Activated CD4-positive, alpha-beta T cell treated with anti-CD3 and anti-CD28 coated beads for 36 hours (primary cell): ENCODE measurements at regions of chr3 and their contacts with region 1.

Region 1: DNA sequence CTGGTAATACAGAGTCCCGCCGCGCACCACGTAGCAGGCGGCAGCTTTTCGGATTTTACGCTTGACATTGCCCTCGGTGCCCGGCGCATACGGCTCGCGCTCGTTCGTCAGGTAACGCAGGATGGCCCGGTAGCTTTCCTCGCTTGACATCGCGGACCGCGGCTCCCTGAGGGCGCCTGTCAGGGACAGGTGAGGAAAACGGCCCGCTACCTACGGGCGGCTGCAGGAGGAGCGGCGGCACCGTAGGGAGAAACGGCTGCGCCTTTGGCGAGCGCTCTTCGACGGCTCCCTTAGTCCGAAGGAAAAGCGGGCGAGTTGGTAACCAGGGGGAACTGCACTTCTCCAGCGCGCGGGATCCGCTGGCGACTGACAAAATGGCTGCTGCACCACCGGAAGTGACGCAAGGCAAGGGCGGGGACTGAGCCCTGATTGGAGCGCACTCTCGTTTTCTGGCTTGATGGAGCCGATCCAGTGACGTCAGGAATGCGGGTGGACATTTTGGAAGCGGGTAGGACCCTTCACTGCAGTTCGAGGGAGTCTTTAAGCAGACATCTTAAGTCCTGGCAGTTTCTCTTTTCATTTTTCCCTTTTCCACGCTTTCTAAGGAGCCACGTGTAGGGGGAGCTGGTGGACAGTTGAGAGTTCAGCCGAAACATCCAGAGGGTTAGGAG is at the start of gene ZBTB11:
- DNase-seq: peak; percentile 100
- ATAC-seq: peak; percentile 78
- H3K4me3 Mint-ChIP-seq: peak within 1 kb of the TSS; percentile 94
- H3K27ac Mint-ChIP-seq: peak within 1 kb of the TSS; percentile 92
- H3K4me1 Mint-ChIP-seq: peaks cover 52% of the 10 kb centered on the region
- H3K27me3 Mint-ChIP-seq: no peaks in the 10 kb centered on the region
- total RNA-seq, gene ZBTB11: 25.1 to 26.0 TPM

Region 2: DNA sequence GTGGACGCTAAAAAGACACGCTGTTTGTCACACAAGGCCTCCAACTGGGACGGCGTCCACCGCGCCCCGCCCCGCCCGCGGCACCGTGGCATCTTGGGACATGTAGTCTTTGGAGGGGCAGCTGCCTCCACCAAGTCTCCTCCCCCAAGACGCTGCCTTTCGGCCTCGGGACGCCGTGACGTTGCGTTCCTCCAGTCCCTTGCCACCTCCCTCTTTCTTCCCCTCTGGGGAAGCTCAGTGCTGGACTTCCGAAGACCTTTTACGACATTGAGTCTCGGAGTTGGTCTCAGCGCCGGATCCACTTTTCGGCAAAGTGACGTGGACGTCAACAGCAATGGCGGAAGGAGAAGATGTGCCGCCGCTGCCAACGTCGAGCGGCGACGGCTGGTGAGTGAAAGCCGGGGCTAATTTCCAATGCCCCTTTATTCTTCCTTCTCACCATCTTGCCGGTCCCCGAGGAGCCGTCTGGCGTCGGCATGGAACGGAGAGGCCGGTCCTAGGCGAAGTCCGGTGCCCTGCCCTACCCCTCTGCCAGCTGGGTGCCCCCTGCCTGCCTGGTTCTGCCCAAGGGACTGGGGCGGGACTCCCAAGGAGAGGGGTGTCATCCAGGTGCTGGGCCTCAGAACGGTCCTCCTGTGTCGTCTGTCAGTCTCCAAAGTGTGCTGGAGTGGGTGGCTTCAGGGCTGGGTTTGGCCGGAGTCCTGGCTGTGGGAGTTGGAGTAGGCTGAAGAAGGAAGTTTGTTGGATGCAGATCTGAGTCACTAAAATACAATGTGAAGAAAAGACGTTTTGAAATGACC is 1416.0 kb before region 1 on chr3 and contains the start of gene TBC1D23:
- CTCF ChIA-PET with region 1: no interaction called
- POLR2A ChIA-PET with region 1: no interaction called
- intact Hi-C with region 1: loop called in 1 of 2 experiments (anchors 2 kb)
- DNase-seq: peak; percentile 98
- ATAC-seq: peak; percentile 100
- H3K4me3 Mint-ChIP-seq: peak within 1 kb of the TSS; percentile 91
- H3K27ac Mint-ChIP-seq: peak within 1 kb of the TSS; percentile 96
- H3K4me1 Mint-ChIP-seq: peaks cover 58% of the 10 kb centered on the region
- H3K27me3 Mint-ChIP-seq: no peaks in the 10 kb centered on the region
- total RNA-seq, gene TBC1D23: 17.6 to 19.4 TPM

Region 3: DNA sequence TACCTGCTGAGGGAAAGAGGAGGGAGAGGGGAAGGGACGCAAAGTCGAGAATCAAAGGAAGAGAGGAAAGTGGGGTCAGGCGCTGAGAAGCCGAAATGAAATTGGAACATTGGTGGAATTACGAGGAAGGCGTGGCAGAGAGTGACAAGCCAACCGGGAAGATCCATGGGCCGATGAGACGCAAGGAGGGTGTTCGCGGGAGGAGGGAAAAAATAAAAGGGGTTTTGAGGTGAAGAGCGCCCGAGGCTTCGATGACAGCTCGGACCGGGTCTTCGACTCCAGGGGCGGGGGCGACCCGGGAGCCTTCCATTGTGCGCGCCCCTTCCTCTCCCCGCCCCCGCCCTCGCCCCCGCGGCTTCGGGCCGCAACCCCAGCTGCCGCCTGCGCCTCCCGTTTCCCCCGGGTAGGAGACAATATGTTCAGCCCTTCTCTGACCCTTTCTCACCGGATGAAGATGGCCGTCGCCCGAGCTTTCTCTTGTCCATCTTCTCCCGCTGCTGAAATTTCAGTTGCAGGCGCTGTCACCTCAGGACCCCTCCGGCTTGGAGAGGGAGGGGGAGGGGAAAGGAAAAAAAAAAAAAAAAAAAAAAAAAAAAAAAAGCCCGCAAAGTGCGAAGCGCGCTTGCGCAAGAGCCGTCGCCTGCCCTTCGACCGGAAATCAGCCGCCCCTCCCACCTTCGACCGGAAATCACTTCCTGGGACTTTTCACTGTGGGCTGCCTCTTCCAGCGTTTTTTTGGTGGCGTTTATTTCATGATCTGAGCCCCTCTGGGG is 164.1 kb before region 1 on chr3 and contains the start of gene SENP7:
- CTCF ChIA-PET with region 1: no interaction called
- POLR2A ChIA-PET with region 1: no interaction called
- intact Hi-C with region 1: loop called (anchors 2 to 5 kb)
- DNase-seq: peak; percentile 88
- ATAC-seq: peak; percentile 49
- H3K4me3 Mint-ChIP-seq: peak within 1 kb of the TSS; percentile 85
- H3K27ac Mint-ChIP-seq: peak within 1 kb of the TSS; percentile 96
- H3K4me1 Mint-ChIP-seq: peaks cover 53% of the 10 kb centered on the region
- H3K27me3 Mint-ChIP-seq: no peaks in the 10 kb centered on the region
- total RNA-seq, gene SENP7: 12.3 to 12.9 TPM

Region 4: DNA sequence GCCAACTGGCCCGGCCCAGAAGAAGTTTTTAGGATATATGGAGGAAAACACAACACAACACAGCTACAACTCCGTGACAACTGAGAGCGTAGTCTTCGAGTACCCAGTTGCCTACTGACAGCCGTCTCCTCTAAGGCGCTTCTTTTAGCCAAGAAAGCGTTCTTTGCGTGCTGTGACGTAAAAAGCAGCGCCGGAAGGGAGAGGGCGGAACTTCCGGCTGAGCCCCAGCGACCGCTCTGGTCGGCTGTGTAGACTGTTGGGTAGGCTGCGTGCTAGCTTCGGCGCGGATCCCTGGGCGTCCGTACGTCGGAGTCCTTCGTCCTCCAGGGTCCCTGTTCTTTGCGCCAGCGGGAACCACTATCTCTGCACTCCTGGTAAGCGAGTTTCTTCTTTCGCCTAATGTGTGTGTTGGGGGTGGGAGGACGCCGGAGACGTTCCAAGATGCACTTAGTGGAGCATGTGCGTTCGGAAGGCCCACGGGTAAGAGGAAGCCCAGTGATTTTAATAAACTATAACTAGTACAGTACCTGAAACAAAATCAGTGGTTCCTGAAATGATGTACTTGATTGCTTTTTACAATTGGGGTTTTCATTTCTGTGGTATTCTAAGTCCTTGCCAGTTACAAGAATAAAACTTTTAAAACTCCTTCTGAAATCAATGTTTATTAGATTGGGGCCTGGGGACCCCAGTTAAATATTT is 115.1 kb before region 1 on chr3 and contains the start of gene TRMT10C:
- CTCF ChIA-PET with region 1: interaction called, 5 read pairs
- POLR2A ChIA-PET with region 1: interaction called, 3 read pairs
- intact Hi-C with region 1: loop called in 1 of 2 experiments (anchors 1 kb)
- DNase-seq: peak; percentile 96
- ATAC-seq: peak; percentile 98
- H3K4me3 Mint-ChIP-seq: peak within 1 kb of the TSS; percentile 93
- H3K27ac Mint-ChIP-seq: peak within 1 kb of the TSS; percentile 96
- H3K4me1 Mint-ChIP-seq: peaks cover 42% of the 10 kb centered on the region
- H3K27me3 Mint-ChIP-seq: peaks cover 4% of the 10 kb centered on the region
- total RNA-seq, gene TRMT10C: 54.3 to 55.4 TPM

Region 5: GRCh38 chr3:101615525-101615924 is 61.4 kb before region 1 on chr3:
- CTCF ChIA-PET with region 1: no interaction called
- POLR2A ChIA-PET with region 1: no interaction called
- intact Hi-C with region 1: no loop called
- DNase-seq: no peak
- ATAC-seq: no peak
- H3K4me3 Mint-ChIP-seq: no peak overlapping the region
- H3K27ac Mint-ChIP-seq: no peak overlapping the region
- H3K4me1 Mint-ChIP-seq: no peaks in the 10 kb centered on the region
- H3K27me3 Mint-ChIP-seq: no peaks in the 10 kb centered on the region

Region 6: DNA sequence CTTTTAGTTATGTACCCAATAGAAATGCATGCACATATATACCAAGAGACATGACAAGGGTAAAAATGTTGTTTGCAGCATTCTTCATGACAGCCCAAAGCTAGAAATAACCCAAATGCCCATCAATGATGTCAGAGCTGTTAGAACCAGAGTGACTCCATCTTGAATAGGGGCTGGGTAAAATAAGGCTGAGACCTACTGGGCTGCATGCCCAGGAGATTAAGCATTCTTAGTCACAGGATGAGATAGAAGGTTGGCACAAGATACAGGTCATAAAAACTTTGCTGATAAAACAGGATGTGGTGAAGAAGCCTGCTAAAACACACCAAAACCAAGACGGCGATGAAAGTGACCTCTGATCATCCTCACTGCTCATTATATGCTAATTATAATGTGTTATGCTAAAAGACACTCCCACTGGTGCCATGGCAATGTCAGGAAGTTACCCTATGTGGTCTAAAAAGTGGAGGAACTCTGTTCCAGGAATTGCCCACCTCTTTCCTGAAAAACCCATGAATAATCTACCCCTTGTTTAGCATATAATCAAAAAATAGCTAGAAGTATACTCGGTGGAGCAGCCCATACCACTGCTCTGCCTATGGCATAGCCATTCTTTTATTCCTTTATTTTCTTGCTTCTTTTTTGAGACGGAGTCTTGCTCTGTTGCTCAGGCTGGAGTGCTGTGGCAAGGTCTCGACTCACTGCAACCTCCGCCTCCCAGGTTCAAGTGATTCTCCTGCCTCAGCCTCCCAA is 32.9 kb before region 1 on chr3:
- CTCF ChIA-PET with region 1: interaction called, 4 read pairs
- POLR2A ChIA-PET with region 1: no interaction called
- intact Hi-C with region 1: loop called in 1 of 2 experiments (anchors 1 kb)
- DNase-seq: peak; percentile 67
- ATAC-seq: peak; percentile 83
- H3K4me3 Mint-ChIP-seq: no peak overlapping the region
- H3K27ac Mint-ChIP-seq: peak overlapping the region; percentile 90
- H3K4me1 Mint-ChIP-seq: peaks cover 29% of the 10 kb centered on the region
- H3K27me3 Mint-ChIP-seq: no peaks in the 10 kb centered on the region

Region 7: GRCh38 chr3:101665357-101665756 is 11.5 kb before region 1 on chr3:
- CTCF ChIA-PET with region 1: interaction called, 11 read pairs
- POLR2A ChIA-PET with region 1: no interaction called
- intact Hi-C with region 1: no loop called
- DNase-seq: no peak
- ATAC-seq: no peak
- H3K4me3 Mint-ChIP-seq: no peak overlapping the region
- H3K27ac Mint-ChIP-seq: no peak overlapping the region
- H3K4me1 Mint-ChIP-seq: no peaks in the 10 kb centered on the region
- H3K27me3 Mint-ChIP-seq: no peaks in the 10 kb centered on the region

Region 8: GRCh38 chr3:101779047-101779821 is 102.3 kb after region 1 on chr3 and contains the start of gene NXPE3:
- CTCF ChIA-PET with region 1: no interaction called
- POLR2A ChIA-PET with region 1: interaction called, 4 read pairs
- intact Hi-C with region 1: loop called in 1 of 2 experiments (anchors 1 kb)
- DNase-seq: peak; percentile 97
- ATAC-seq: peak; percentile 92
- H3K4me3 Mint-ChIP-seq: peak within 1 kb of the TSS; percentile 91
- H3K27ac Mint-ChIP-seq: peak within 1 kb of the TSS; percentile 96
- H3K4me1 Mint-ChIP-seq: peaks cover 49% of the 10 kb centered on the region
- H3K27me3 Mint-ChIP-seq: no peaks in the 10 kb centered on the region
- total RNA-seq, gene NXPE3: 12.8 to 18.5 TPM